ENCODE measurements at regions of chrX and their contacts with region 1.

Region 1: GRCh38 chrX:130079824-130080406 is 30.4 kb downstream of the ELF4 start:
- DNase-seq: peak in 1 of 2 donors; percentile 68
- ATAC-seq: peak; percentile 75

Region 2: GRCh38 chrX:129637217-129638109 is 442.5 kb before region 1 on chrX:
- intact Hi-C with region 1: no loop called
- DNase-seq: peak; percentile 40 to 68
- ATAC-seq: peak; percentile 44

Region 3: GRCh38 chrX:130179579-130180215 is 99.8 kb after region 1 on chrX:
- intact Hi-C with region 1: loop called in 1 of 2 experiments (anchors 10 kb)
- DNase-seq: no peak
- ATAC-seq: no peak

Region 4: GRCh38 chrX:130196466-130196865 is 116.6 kb after region 1 on chrX:
- intact Hi-C with region 1: loop called in 1 of 2 experiments (anchors 5 kb)
- DNase-seq: no peak
- ATAC-seq: no peak

Region 5: DNA sequence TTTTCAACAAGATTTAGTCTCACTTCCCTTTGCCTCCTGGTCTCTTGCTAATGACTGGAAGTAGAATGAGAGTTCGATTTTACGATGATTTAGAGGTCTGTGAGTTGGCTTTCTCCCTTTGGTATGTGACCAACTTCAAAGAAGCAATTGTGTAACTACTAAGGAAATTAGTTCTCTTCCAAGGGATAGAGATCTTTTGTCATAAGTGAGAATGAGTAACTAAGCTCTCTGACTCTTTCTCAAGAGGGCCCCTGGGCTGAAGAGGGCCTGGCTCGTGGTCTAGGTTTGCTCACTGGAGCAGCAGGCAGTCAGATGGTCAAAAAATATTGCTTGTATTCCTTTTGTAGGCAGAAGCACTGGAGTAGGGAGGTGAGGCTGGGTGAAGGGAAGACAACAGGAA is 646.7 kb after region 1 on chrX:
- intact Hi-C with region 1: no loop called
- DNase-seq: no peak
- ATAC-seq: no peak

Measured in left colon (tissue), 2 donors.